ENCODE measurements at regions of chr14 and their contacts with region 1.

Region 1: DNA sequence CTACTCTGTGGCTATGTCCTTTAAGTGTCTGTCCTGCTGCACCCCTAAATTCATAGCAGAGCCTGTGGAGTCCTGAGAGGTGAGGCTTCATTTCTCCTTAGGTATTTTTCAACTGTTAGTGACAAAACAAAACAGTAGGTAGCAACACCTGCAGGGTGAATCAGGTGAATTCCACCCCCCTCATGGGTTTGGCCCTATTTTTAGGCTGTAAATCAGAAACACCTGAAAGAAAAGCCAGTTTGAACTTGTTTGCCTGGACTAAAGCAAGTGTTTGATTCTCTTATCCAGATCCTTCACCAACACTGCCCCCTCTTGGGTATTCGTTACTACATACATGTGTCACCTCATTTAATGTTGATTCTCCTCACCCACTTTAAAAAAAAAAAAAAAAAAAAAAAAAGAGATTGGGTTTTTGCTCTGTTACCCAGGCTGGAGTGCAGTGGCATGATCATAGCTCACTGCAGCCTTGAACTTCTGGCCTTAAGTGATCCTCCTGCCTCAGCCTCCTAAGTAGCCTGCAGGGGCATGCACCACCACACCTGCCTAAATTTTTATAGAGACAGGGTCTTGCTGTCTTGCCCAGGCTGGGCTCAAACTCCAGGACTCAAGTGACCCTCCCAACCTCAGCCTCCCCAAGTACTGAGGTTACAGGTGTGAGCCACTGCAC is 10.3 kb downstream of the TBPL2 start:
- DNase-seq: peak in 8 of 9 experiments; percentile 19 to 83 (median 46)
- ATAC-seq: peak; percentile 92
- H3K4me3 ChIP-seq: no peak overlapping the region
- H3K4me3 Mint-ChIP-seq: no peak overlapping the region
- H3K27ac ChIP-seq: no peak overlapping the region
- H3K27ac Mint-ChIP-seq: peak overlapping the region; percentile 72
- H3K4me1 ChIP-seq: peaks cover 24% of the 10 kb centered on the region
- H3K4me1 Mint-ChIP-seq: peaks cover 33% of the 10 kb centered on the region
- H3K27me3 ChIP-seq: no peaks in the 10 kb centered on the region
- H3K27me3 Mint-ChIP-seq: no peaks in the 10 kb centered on the region
- CTCF ChIP-seq: peak; percentile 50

Region 2: DNA sequence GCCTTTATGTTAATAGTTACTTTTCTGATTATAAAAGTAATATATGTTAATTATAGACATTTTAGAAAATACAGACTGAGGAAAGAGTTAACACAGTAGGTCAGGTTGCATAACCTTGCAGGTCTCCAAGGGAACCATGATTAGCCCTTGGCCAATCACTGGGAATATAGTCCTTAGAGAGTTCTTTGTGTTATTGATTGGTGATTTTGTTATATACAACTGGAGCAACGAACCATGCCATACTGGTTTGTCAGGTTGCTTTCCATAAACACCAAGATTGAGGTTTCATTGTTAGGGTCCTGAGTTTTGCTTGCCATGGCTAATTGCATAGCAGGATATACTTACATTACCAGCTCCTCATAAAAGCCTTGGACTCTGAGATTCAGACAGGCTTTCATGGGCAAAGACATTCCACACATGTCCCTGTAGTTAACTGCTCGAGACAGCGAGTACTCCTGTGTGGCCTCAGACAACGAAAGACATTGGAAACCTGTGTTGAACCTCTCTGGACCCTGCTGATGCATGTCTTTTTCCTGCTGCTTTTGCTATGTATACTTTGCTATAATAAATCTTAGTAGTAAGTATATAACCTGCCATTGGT is 345.0 kb before region 1 on chr14:
- CTCF ChIA-PET with region 1: interaction called, 5 read pairs
- POLR2A ChIA-PET with region 1: no interaction called
- intact Hi-C with region 1: loop called (anchors 1 kb)
- DNase-seq: peak in 1 of 9 experiments; percentile 5
- ATAC-seq: no peak
- H3K4me3 ChIP-seq: no peak overlapping the region
- H3K4me3 Mint-ChIP-seq: no peak overlapping the region
- H3K27ac ChIP-seq: no peak overlapping the region
- H3K27ac Mint-ChIP-seq: no peak overlapping the region
- H3K4me1 ChIP-seq: no peaks in the 10 kb centered on the region
- H3K4me1 Mint-ChIP-seq: peaks cover 3% of the 10 kb centered on the region
- H3K27me3 ChIP-seq: no peaks in the 10 kb centered on the region
- H3K27me3 Mint-ChIP-seq: no peaks in the 10 kb centered on the region
- CTCF ChIP-seq: no peak

Region 3: GRCh38 chr14:55212634-55213033 is 217.5 kb before region 1 on chr14:
- CTCF ChIA-PET with region 1: interaction called, 3 read pairs
- POLR2A ChIA-PET with region 1: interaction called, 3 read pairs
- intact Hi-C with region 1: loop called (anchors 1 to 2 kb)
- DNase-seq: peak in 1 of 9 experiments; percentile 11
- ATAC-seq: no peak
- H3K4me3 ChIP-seq: no peak overlapping the region
- H3K4me3 Mint-ChIP-seq: no peak overlapping the region
- H3K27ac ChIP-seq: no peak overlapping the region
- H3K27ac Mint-ChIP-seq: no peak overlapping the region
- H3K4me1 ChIP-seq: no peaks in the 10 kb centered on the region
- H3K4me1 Mint-ChIP-seq: peaks cover 3% of the 10 kb centered on the region
- H3K27me3 ChIP-seq: no peaks in the 10 kb centered on the region
- H3K27me3 Mint-ChIP-seq: no peaks in the 10 kb centered on the region
- CTCF ChIP-seq: no peak

Region 4: DNA sequence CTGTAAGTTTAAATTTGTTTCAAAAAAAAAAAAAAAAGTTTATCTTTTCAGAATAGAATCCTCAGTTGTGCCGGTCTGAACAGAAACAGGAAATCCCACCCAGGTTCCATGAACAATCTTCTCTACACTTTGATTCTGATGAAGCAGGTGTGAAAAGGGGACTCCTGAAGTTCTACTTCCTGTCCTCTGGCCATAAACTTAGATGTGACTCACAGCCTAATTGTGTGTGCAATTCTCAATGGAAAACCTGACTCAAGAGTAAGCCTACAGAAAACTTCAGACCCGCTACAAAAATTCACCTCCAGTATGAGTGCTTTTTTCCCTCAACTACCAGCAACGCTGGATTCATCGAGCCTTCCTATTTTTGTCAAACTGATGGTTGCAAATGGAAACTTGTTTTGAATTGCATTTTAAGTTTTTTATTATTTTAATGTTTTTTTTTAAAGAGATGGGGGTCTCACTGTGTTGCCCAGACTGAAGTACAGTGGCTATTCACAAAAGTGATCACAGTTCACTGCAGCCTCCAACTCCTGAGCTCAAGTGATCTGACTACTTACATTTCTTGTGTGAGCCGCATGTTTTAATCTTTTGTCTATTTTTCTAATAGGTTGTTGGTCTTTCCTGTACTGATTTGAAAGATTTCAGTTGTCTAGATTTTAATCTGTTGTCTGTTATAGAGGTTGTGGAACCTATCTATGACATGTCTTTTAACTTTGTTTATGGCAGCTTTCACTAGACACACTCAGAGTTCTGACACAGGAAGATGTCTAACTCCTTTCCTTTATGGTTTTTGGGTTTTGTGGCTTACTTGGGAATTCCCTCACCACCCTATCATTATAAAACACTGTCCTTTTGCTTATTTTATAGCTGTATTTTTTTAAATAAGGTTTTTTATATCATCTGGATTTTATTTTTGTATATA is 56.1 kb before region 1 on chr14:
- CTCF ChIA-PET with region 1: interaction called, 4 read pairs
- POLR2A ChIA-PET with region 1: interaction called, 4 read pairs
- intact Hi-C with region 1: loop called in 1 of 2 experiments (anchors 2 kb)
- DNase-seq: peak in 6 of 9 experiments; percentile 5 to 86 (median 22)
- ATAC-seq: peak; percentile 85
- H3K4me3 ChIP-seq: no peak overlapping the region
- H3K4me3 Mint-ChIP-seq: peak overlapping the region; percentile 36
- H3K27ac ChIP-seq: peak overlapping the region; percentile 35 to 52
- H3K27ac Mint-ChIP-seq: peak overlapping the region; percentile 84
- H3K4me1 ChIP-seq: peaks cover 14% of the 10 kb centered on the region
- H3K4me1 Mint-ChIP-seq: peaks cover 30% of the 10 kb centered on the region
- H3K27me3 ChIP-seq: no peaks in the 10 kb centered on the region
- H3K27me3 Mint-ChIP-seq: no peaks in the 10 kb centered on the region
- CTCF ChIP-seq: no peak

Region 5: GRCh38 chr14:55446218-55446654 is 16.1 kb after region 1 on chr14:
- CTCF ChIA-PET with region 1: interaction called, 44 read pairs
- POLR2A ChIA-PET with region 1: interaction called, 3 read pairs
- intact Hi-C with region 1: no loop called
- DNase-seq: peak; percentile 3 to 72 (median 53)
- ATAC-seq: no peak
- H3K4me3 ChIP-seq: no peak overlapping the region
- H3K4me3 Mint-ChIP-seq: no peak overlapping the region
- H3K27ac ChIP-seq: no peak overlapping the region
- H3K27ac Mint-ChIP-seq: no peak overlapping the region
- H3K4me1 ChIP-seq: no peaks in the 10 kb centered on the region
- H3K4me1 Mint-ChIP-seq: peaks cover 3% of the 10 kb centered on the region
- H3K27me3 ChIP-seq: no peaks in the 10 kb centered on the region
- H3K27me3 Mint-ChIP-seq: peaks cover 3% of the 10 kb centered on the region
- CTCF ChIP-seq: peak; percentile 80